K562 (cell line): ENCODE measurements at regions of chr20 and their contacts with region 1.

Region 1: GRCh38 chr20:16621435-16622141 is 48.3 kb upstream of the KIF16B start:
- DNase-seq: peak in 1 of 4 experiments; percentile 8
- ATAC-seq: peak; percentile 56; the same call in 1 of the 3 replicates
- H3K4me3 ChIP-seq: no peak overlapping the region
- H3K27ac ChIP-seq: no peak overlapping the region
- H3K4me1 ChIP-seq: no peaks in the 10 kb centered on the region; a peak in 2 of 5 replicates
- H3K27me3 ChIP-seq: no peaks in the 10 kb centered on the region
- CTCF ChIP-seq: no peak
- EP300 ChIP-seq: no peak
- POLR2A ChIP-seq: no peak
- RAD21 ChIP-seq: 0 out of 4 replicates have a peak, but pooled peaks of 1 of the 2 experiments have one; percentile 13

Region 2: GRCh38 chr20:16517946-16518783 is 103.4 kb before region 1 on chr20:
- CTCF ChIA-PET with region 1: no interaction called
- POLR2A ChIA-PET with region 1: no interaction called
- in situ Hi-C with region 1: no loop called
- intact Hi-C with region 1: loop called (anchors 10 kb)
- DNase-seq: peak; percentile 18 to 47 (median 34)
- ATAC-seq: peak; percentile 81
- H3K4me3 ChIP-seq: no peak overlapping the region
- H3K27ac ChIP-seq: no peak overlapping the region
- H3K4me1 ChIP-seq: no peaks in the 10 kb centered on the region
- H3K27me3 ChIP-seq: no peaks in the 10 kb centered on the region
- CTCF ChIP-seq: peak; percentile 44 to 58 (median 55)
- EP300 ChIP-seq: no peak
- POLR2A ChIP-seq: no peak
- RAD21 ChIP-seq: peak; percentile 49 to 57

Region 3: GRCh38 chr20:16661756-16662155 is 40.2 kb after region 1 on chr20:
- CTCF ChIA-PET with region 1: no interaction called
- POLR2A ChIA-PET with region 1: no interaction called
- in situ Hi-C with region 1: no loop called
- intact Hi-C with region 1: no loop called
- DNase-seq: no peak
- ATAC-seq: no peak
- H3K4me3 ChIP-seq: no peak overlapping the region
- H3K27ac ChIP-seq: no peak overlapping the region
- H3K4me1 ChIP-seq: no peaks in the 10 kb centered on the region; a peak in 1 of 5 replicates
- H3K27me3 ChIP-seq: no peaks in the 10 kb centered on the region
- CTCF ChIP-seq: no peak
- EP300 ChIP-seq: no peak
- POLR2A ChIP-seq: no peak
- RAD21 ChIP-seq: no peak